ENCODE measurements at regions of chr2 and their contacts with region 1.

Region 1: DNA sequence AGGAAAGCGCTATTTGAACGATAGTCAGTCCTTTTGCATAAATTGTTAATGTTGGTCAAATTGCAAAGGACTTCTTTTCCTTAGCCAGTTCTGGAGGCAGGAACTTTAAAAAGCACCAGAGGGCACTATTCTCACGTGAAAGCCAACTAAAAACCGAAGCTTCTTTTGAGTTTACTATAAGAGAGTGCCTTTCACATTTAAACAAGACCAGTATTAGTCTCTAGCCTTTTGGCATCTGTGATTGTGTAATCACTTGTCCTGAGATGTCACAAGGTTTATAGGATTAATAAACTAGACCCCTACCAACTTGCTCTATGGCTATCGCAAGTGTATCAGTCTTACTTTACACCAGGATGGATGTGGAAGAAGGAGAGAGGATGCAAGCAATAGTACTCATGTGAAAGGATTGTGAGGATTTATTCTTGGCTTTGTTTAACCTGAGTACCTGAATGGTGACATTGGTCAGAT is 14.4 kb upstream of the STAT4 start:
- DNase-seq: no peak
- H3K4me3 ChIP-seq: no peak overlapping the region
- H3K27ac ChIP-seq: no peak overlapping the region
- H3K4me1 ChIP-seq: peaks cover 11 to 18% of the 10 kb centered on the region in 2 donors
- H3K27me3 ChIP-seq: no peaks in the 10 kb centered on the region
- CTCF ChIP-seq: peak in 5 of 6 experiments; percentile 30 to 72 (median 52)
- POLR2A ChIP-seq: no peak

Region 2: DNA sequence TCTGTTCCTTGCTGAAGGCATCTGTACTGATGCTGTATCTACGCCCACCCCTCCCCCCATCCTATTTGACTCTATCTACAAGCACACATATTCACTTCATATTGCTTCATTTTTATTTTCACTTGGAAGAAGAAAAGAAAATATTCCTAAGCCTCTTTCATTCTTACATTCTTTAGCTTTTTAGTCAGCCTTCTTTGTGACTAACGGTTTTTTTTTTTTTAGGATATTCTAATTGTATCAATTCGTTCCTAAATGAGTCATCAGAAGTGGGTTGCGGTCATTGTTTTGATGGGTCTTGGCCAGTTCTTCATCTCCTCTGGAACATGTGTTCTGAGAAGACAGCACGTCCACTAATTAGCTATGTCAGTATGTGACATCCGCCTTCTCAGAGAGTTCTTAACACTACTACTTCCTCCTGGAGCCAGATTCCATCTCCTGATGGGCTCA is 168.7 kb after region 1 on chr2:
- intact Hi-C with region 1: no loop called
- DNase-seq: no peak
- H3K4me3 ChIP-seq: no peak overlapping the region
- H3K27ac ChIP-seq: no peak overlapping the region
- H3K4me1 ChIP-seq: peaks cover 0 to 3% of the 10 kb centered on the region in 2 donors
- H3K27me3 ChIP-seq: no peaks in the 10 kb centered on the region
- CTCF ChIP-seq: no peak
- POLR2A ChIP-seq: no peak

Region 3: DNA sequence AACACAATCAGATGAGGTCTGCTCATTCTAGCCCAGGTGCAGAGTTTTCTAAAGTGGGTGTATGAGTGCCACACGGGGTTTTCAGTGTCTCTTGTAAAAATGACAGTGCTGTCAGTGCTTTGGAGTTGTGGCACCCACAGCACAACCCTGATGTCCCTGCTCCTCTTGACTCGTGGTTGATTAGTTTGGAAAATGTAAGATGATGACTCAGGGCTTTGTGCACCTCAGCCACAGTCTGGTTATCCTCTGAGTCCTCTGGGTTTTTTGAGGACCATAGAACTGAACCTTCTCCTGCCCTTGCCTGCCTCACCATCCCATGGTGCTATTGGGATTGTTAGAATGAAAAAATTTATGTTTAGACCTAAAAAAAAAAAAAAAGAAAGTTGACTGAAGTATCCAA is 185.6 kb after region 1 on chr2:
- intact Hi-C with region 1: no loop called
- DNase-seq: no peak
- H3K4me3 ChIP-seq: no peak overlapping the region
- H3K27ac ChIP-seq: no peak overlapping the region
- H3K4me1 ChIP-seq: no peaks in the 10 kb centered on the region
- H3K27me3 ChIP-seq: no peaks in the 10 kb centered on the region
- CTCF ChIP-seq: no peak
- POLR2A ChIP-seq: no peak

Region 4: DNA sequence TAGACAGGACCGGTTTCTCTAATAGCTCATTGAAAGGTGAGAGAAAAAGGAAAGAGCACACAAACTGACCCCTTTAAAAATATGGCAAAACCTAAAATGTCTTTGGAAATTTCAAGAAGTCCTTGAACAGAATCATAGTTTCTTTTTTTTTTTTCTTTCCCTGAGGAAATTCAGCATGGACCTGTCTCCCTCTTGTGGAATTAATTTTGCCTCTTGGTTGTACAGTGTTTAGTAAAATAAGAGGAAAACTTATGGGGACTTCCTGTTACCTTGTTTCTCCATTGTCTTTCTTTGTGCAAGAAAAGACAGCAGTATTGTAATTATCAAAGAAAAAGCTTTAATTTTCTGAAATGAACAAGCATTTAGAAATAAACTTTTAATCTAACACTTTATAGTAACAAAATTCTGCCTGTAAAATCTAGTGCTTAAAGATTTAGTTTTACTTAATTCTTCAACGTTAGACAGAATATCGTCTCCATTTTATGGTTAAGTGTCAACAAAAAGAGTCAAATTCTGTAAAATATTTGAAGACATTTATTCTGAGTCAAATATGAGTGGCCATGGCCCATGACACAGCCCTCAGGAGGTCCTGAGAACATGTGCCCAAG is 336.5 kb after region 1 on chr2:
- intact Hi-C with region 1: loop called (anchors 5 kb)
- DNase-seq: no peak
- H3K4me3 ChIP-seq: no peak overlapping the region
- H3K27ac ChIP-seq: peak overlapping the region in 2 of 3 donors; percentile 27 to 33
- H3K4me1 ChIP-seq: peaks cover 0 to 6% of the 10 kb centered on the region in 2 donors
- H3K27me3 ChIP-seq: no peaks in the 10 kb centered on the region
- CTCF ChIP-seq: peak in 4 of 6 experiments; percentile 22 to 72 (median 60)
- POLR2A ChIP-seq: no peak

Region 5: DNA sequence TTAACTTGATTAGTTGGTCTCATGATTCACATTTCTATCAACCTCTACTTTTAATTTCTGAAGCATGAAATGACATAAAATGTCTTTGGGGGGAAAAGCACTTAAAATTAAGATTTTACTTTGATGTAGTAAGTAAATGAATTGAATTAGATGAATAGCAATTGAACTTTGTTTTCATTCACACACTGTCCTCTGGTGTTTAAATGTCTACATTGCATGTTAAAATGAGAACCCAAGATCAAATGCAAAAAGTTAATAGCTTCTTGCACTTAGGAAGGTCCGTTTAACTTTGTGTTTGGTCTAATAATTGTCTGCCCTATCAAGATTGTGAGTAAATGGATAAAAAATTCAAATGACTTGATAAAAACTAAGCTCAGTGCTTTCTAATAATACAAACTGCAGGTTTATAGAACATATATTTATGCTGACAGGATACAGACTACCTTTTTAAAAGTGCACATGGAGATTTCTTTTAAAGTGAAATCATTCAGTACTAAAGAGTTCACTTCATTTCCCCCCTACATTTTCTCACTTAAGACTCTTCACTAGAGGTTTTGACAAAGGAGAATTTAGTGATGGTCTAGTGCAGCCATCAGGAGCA is 356.5 kb after region 1 on chr2:
- intact Hi-C with region 1: loop called (anchors 5 kb)
- DNase-seq: no peak
- H3K4me3 ChIP-seq: no peak overlapping the region
- H3K27ac ChIP-seq: no peak overlapping the region
- H3K4me1 ChIP-seq: no peaks in the 10 kb centered on the region
- H3K27me3 ChIP-seq: no peaks in the 10 kb centered on the region
- CTCF ChIP-seq: peak; percentile 34 to 88 (median 66)
- POLR2A ChIP-seq: no peak

Measured in thyroid gland (tissue), 4 donors.